Common myeloid progenitor, CD34-positive (primary cell): ENCODE measurements at regions of chr5 and their contacts with region 1.

Region 1: DNA sequence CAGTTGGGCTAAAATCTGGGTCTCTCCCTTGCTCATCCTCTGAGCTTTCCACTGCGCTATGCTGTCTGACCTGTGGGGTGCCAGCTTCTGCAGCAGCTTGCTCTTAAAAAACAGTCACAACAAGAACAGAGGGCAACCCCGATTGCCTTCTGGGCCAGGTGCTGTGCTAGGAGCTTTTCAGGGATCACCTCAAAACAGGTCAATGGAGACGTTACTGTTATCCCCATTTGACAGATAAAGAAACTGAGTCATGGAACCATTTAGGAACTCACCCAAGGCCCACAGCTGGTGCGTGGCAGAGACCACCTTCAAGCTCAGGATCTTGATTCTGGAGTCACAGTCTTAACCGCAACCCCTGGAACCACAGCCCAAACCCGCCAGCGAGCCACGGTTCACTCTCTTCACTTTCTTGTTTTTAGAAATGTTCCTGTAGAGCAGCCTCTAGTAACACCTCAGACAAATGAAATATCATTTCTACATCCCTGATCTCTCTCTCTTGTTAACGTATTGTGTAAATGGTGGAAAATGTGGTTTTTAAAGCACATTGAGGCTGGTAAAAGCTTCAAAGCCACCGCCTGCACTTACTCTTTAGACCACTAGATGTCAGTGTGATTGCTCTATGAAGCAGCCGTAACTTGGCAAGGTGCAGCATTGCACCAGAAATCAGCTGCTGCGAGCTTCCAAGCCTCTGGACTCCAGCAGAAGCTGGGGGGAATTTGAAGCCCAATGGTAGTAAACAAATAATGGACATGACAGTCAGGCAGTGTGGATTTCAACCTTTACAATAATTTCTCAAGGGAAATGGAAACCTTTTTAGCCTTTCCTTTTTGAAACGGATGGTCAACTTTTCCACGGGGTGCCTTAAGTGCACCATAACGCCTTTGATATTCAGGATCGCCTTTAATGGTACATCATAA is 1.7 kb downstream of the FYB1 start:
- DNase-seq: peak; percentile 76 to 92 (median 89)
- H3K4me3 ChIP-seq: peak overlapping the region in 1 of 7 experiments; percentile 47
- H3K27ac ChIP-seq: no peak overlapping the region
- H3K4me1 ChIP-seq: peaks cover 14 to 41% (median 20%) of the 10 kb centered on the region in 4 experiments
- H3K27me3 ChIP-seq: no peaks in the 10 kb centered on the region

Region 2: DNA sequence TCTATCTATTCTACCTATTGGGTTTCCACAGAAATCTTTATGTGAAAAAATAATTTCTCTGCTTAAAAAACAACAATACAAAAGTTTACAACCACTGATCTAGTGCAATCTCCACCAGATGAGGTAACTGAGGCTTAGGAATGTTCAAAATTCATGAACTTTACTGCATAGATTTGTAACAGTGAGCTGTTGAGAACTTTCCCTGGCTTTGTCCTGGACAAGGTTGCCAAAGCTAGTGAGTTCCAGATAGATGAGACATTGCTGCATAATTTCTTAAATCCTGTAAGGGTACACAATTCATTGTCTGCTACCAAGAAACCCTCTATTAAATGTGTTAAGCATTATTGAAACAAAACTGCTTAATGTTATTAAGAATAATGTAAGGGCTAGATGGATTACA is 269.1 kb before region 1 on chr5:
- CTCF ChIA-PET with region 1: no interaction called
- POLR2A ChIA-PET with region 1: no interaction called
- DNase-seq: no peak
- H3K4me3 ChIP-seq: no peak overlapping the region
- H3K27ac ChIP-seq: no peak overlapping the region
- H3K4me1 ChIP-seq: no peaks in the 10 kb centered on the region
- H3K27me3 ChIP-seq: no peaks in the 10 kb centered on the region

Region 3: DNA sequence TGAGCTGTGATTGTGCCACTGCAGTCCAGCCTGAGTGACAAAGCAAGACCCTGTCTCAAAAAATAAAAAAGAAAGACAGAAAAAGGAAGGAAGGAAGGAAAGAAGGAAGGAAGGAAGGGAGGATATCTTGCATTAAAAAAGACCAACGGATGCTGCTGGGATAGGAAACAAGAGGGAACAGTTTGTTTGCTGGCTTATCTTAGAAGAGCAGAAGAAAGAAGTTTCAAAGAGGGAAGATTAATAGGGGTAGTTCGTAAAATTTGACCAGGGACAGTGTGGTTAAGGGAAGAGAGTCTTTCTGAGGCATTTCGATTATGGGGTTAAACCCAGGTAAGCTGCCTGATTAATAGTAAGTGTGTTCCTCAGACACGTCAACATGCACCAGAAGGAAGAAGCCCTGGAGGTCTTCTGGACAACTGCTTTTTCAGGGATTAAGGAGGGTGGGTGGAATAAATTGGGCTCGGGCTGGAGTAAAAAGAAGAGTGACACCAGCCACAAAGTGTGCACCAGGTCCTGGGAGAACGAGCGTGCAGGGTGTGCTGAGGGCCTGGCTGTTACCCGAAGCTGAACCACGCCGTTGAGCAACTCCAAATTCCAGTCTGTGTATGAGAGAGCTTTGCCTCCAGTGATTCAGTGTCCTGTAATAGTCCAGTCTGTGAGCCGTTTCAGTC is 23.0 kb before region 1 on chr5:
- CTCF ChIA-PET with region 1: interaction called, 19 read pairs
- POLR2A ChIA-PET with region 1: no interaction called
- DNase-seq: peak in 2 of 3 donors; percentile 42 to 62
- H3K4me3 ChIP-seq: peak overlapping the region in 1 of 7 experiments; percentile 19
- H3K27ac ChIP-seq: peak overlapping the region in 1 of 2 experiments; percentile 30
- H3K4me1 ChIP-seq: peaks cover 26 to 56% (median 44%) of the 10 kb centered on the region in 4 experiments
- H3K27me3 ChIP-seq: no peaks in the 10 kb centered on the region

Region 4: GRCh38 chr5:39202597-39203274 is 14.9 kb before region 1 on chr5:
- CTCF ChIA-PET with region 1: interaction called, 19 read pairs
- POLR2A ChIA-PET with region 1: no interaction called
- DNase-seq: peak in 2 of 3 donors; percentile 64 to 67
- H3K4me3 ChIP-seq: peak overlapping the region in 4 of 7 experiments; percentile 2 to 74 (median 32)
- H3K27ac ChIP-seq: peak overlapping the region in 1 of 2 experiments; percentile 43
- H3K4me1 ChIP-seq: peaks cover 7 to 52% (median 25%) of the 10 kb centered on the region in 4 experiments
- H3K27me3 ChIP-seq: no peaks in the 10 kb centered on the region

Region 5: DNA sequence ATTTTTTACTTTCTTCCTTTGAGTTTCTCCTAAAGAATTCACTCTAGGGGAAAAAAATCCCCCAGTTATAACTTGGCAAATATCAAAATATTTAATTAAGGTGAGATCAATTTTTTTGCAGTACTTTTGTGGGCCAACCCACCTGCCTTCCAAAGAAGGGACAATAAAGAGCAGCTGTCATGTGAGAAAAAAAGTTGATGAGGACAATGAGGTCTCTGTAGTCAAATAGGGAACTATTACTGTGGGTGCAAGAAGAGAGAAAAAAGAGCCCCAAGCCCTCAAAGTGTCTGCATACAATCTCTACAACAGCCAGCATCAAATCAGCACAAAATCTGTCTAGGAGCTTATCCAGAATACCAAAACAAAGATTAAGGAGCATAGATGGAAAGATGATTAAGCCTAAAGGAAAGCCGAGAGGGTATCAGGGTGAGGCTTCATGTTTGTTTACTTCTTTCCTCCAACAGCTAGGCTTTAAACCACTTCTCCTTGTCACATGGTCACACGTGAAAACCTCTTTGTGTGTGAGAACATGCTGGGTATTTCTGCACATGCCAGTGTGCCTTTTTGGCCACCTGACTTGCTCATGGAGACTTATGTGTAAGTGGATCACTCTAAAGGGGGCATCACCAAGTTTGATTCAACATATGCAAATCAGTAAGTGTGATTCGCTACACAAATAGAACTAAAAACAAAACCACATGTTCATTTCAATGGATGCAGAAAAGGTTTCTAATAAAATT is 20.9 kb after region 1 on chr5:
- CTCF ChIA-PET with region 1: interaction called, 13 read pairs
- POLR2A ChIA-PET with region 1: no interaction called
- DNase-seq: no peak
- H3K4me3 ChIP-seq: no peak overlapping the region
- H3K27ac ChIP-seq: no peak overlapping the region
- H3K4me1 ChIP-seq: peaks cover 0 to 2% (median 0%) of the 10 kb centered on the region in 4 experiments
- H3K27me3 ChIP-seq: no peaks in the 10 kb centered on the region

Region 6: GRCh38 chr5:39256477-39257235 is 39.0 kb after region 1 on chr5:
- CTCF ChIA-PET with region 1: interaction called, 13 read pairs
- POLR2A ChIA-PET with region 1: no interaction called
- DNase-seq: peak; percentile 81 to 96 (median 96)
- H3K4me3 ChIP-seq: peak overlapping the region in 1 of 7 experiments; percentile 64
- H3K27ac ChIP-seq: peak overlapping the region in 1 of 2 experiments; percentile 68
- H3K4me1 ChIP-seq: peaks cover 0 to 17% (median 5%) of the 10 kb centered on the region in 4 experiments
- H3K27me3 ChIP-seq: no peaks in the 10 kb centered on the region

Region 7: DNA sequence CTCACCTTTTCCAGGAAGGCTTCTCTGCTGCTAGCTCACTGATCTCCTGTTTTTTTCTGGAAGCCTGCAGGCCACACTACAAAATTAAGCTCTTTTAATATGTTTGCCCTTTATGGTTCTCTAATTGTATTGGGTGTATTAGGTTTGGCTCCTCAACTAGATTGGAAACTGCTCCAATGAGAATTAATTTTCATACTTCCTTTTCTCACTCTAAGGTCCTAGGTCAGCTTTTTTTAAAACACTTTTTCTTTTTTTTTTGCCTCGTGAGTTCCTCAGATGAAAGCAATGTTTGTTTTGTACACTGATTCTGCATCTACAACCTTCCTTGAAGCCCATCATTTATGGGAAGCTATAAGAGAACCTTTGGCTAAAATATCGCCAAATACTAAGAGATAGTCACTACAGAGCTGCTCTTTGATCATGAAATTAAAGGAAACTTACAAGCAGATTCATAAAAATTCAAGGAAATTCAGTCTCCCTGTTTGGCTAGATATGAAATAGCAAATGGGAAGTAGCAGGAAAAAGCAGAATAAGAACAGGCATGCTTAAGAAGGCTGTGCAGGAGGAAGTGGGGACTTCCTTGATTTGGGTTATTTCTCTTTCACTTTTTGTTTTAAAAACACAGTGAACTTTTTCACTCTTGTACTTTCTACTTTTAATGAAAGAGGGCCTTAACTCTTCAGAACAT is 56.9 kb after region 1 on chr5:
- CTCF ChIA-PET with region 1: interaction called, 90 read pairs
- POLR2A ChIA-PET with region 1: no interaction called
- DNase-seq: peak; percentile 59 to 79 (median 72)
- H3K4me3 ChIP-seq: peak overlapping the region in 6 of 7 experiments; percentile 47 to 72 (median 57)
- H3K27ac ChIP-seq: peak overlapping the region; percentile 70 to 74
- H3K4me1 ChIP-seq: peaks cover 16 to 49% (median 29%) of the 10 kb centered on the region in 4 experiments
- H3K27me3 ChIP-seq: no peaks in the 10 kb centered on the region

Region 8: GRCh38 chr5:39283231-39283818 is 65.7 kb after region 1 on chr5:
- CTCF ChIA-PET with region 1: interaction called, 90 read pairs
- POLR2A ChIA-PET with region 1: no interaction called
- DNase-seq: peak; percentile 79 to 88 (median 80)
- H3K4me3 ChIP-seq: no peak overlapping the region
- H3K27ac ChIP-seq: no peak overlapping the region
- H3K4me1 ChIP-seq: no peaks in the 10 kb centered on the region
- H3K27me3 ChIP-seq: no peaks in the 10 kb centered on the region